Activated B cell treated with CpG ODN at 0.5 μM for 24 hours (primary cell): ENCODE measurements at regions of chr10 and their contacts with region 1.

Region 1: DNA sequence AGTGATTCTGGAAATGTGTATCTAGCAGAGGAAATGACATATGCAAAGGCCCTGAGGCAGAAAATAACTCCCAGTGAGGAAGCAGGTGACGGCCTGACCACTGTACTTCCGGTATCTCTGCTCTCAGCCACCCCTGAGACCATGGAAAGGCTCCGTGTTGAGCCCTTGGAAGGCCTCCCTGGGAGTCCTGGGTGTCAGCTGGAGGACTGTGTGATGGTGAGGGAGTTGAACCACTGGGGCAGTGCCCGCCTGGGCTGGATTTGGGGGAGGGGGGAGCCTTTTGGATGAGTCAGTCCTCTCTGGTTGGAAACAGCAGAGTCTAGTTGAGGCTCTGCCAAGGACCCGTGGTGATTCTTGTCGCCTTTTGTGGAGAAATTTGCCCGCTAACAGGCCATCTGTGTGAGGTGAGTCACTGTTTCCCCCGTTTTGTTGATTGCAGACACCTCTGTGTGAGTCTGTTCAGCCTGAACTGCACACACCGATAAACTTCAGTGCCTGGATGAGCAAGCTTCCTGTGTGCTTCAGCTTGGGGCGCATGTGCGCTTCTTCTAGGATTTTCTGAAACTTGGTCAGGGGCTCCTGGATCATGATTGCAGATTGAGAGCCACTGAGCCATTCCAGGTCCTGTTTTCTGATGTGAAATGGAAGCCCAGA is 98.6 kb downstream of the GRK5 start:
- DNase-seq: peak; percentile 77
- ATAC-seq: peak; percentile 72
- H3K4me3 Mint-ChIP-seq: peak overlapping the region; percentile 86
- H3K27ac Mint-ChIP-seq: peak overlapping the region; percentile 100
- H3K4me1 Mint-ChIP-seq: peaks cover 98% of the 10 kb centered on the region
- H3K27me3 Mint-ChIP-seq: no peaks in the 10 kb centered on the region
- CTCF ChIP-seq: no peak

Region 2: GRCh38 chr10:118729641-118730258 is 576.2 kb before region 1 on chr10:
- CTCF ChIA-PET with region 1: no interaction called
- POLR2A ChIA-PET with region 1: no interaction called
- intact Hi-C with region 1: loop called (anchors 5 kb)
- DNase-seq: no peak
- ATAC-seq: peak; percentile 96
- H3K4me3 Mint-ChIP-seq: peak overlapping the region; percentile 63
- H3K27ac Mint-ChIP-seq: peak overlapping the region; percentile 80
- H3K4me1 Mint-ChIP-seq: peaks cover 53% of the 10 kb centered on the region
- H3K27me3 Mint-ChIP-seq: no peaks in the 10 kb centered on the region
- CTCF ChIP-seq: no peak

Region 3: DNA sequence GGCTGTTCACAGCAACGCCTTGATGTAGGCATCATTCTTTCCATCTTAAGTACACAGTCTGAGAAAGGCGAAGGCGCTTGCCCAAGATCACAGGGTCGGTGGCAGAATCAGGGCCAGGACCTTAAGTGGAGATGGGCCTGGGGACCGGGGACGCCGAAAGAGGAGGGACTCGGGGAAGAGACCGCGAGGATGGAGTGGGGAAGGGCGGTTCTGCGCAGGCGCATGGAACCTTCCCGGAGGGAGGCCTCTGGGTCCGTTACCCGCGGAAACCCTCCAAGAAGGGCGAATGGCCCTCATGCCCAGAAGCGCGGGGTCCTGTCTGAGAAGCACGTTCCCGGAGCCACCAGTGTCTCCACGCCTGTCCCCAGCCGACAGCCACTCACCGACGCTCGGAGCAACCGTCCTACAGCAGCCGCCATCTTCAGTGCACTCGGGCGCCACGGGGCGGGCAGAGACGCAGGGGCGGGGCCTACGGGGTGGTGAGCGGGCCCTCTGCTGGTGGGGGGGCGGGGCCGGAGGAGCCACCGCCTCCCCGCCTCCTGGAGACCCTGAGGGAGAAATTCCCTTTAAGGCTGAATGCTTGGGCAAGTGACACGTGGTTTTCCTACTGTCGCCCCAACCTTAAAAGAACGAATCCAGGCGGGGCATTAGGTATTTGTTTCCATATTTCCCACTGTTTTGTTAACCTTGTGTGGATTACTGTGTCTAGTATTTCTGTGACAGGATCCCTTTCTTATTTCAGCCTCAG is 127.4 kb before region 1 on chr10 and contains the start of gene PRDX3:
- CTCF ChIA-PET with region 1: no interaction called
- POLR2A ChIA-PET with region 1: interaction called, 5 read pairs
- intact Hi-C with region 1: loop called (anchors 1 kb)
- DNase-seq: peak; percentile 92
- ATAC-seq: peak; percentile 99
- H3K4me3 Mint-ChIP-seq: peak within 1 kb of the TSS; percentile 98
- H3K27ac Mint-ChIP-seq: peak within 1 kb of the TSS; percentile 93
- H3K4me1 Mint-ChIP-seq: peaks cover 26% of the 10 kb centered on the region
- H3K27me3 Mint-ChIP-seq: no peaks in the 10 kb centered on the region
- CTCF ChIP-seq: no peak
- total RNA-seq, gene PRDX3: 62.8 and 63.7 TPM in 2 replicates

Region 4: DNA sequence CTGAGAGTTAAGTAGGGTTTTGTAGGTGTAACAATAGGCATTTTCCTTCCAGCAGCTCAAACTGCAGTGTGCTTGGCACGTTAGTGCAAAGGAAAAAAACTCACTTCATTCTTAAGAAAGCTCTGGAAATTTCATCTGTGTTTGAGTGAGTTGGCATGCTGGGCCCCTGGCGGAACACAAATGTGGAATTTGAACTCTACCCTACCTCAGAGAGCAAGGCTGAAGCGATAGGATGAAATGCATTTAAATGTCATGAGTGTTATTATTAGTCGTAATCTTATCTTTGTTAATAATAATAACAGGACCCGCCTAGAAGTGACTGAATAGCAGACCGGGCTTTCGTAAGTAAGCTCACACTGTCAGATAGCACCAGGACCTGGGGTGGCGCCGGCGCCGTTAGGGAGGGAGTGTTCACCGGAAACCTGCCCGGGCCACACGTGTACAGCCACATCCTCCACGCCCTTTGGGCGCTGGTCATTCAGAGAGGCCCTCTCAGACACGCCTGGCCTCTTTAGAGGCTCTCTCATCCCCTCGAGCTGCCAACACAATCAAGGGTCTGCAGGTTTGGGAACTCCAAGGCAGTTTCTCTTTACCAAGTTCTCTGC is 35.1 kb before region 1 on chr10:
- CTCF ChIA-PET with region 1: interaction called, 5 read pairs
- POLR2A ChIA-PET with region 1: interaction called, 34 read pairs
- intact Hi-C with region 1: loop called (anchors 1 kb)
- DNase-seq: peak; percentile 45
- ATAC-seq: peak; percentile 49
- H3K4me3 Mint-ChIP-seq: peak overlapping the region; percentile 69
- H3K27ac Mint-ChIP-seq: peak overlapping the region; percentile 96
- H3K4me1 Mint-ChIP-seq: peaks cover 87% of the 10 kb centered on the region
- H3K27me3 Mint-ChIP-seq: no peaks in the 10 kb centered on the region
- CTCF ChIP-seq: no peak

Region 5: GRCh38 chr10:119348516-119349240 is 42.7 kb after region 1 on chr10:
- CTCF ChIA-PET with region 1: no interaction called
- POLR2A ChIA-PET with region 1: no interaction called
- intact Hi-C with region 1: no loop called
- DNase-seq: no peak
- ATAC-seq: no peak
- H3K4me3 Mint-ChIP-seq: no peak overlapping the region
- H3K27ac Mint-ChIP-seq: no peak overlapping the region
- H3K4me1 Mint-ChIP-seq: peaks cover 19% of the 10 kb centered on the region
- H3K27me3 Mint-ChIP-seq: no peaks in the 10 kb centered on the region
- CTCF ChIP-seq: no peak

Region 6: GRCh38 chr10:119395280-119395989 is 89.4 kb after region 1 on chr10:
- CTCF ChIA-PET with region 1: interaction called, 3 read pairs
- POLR2A ChIA-PET with region 1: interaction called, 11 read pairs
- intact Hi-C with region 1: loop called (anchors 2 kb)
- DNase-seq: peak; percentile 32
- ATAC-seq: peak; percentile 77
- H3K4me3 Mint-ChIP-seq: peak overlapping the region; percentile 60
- H3K27ac Mint-ChIP-seq: peak overlapping the region; percentile 91
- H3K4me1 Mint-ChIP-seq: peaks cover 44% of the 10 kb centered on the region
- H3K27me3 Mint-ChIP-seq: no peaks in the 10 kb centered on the region
- CTCF ChIP-seq: no peak

Region 7: GRCh38 chr10:119478111-119478802 is 172.3 kb after region 1 on chr10:
- CTCF ChIA-PET with region 1: interaction called, 3 read pairs
- POLR2A ChIA-PET with region 1: interaction called, 14 read pairs
- intact Hi-C with region 1: loop called (anchors 1 kb)
- DNase-seq: peak; percentile 66
- ATAC-seq: peak; percentile 96
- H3K4me3 Mint-ChIP-seq: peak overlapping the region; percentile 68
- H3K27ac Mint-ChIP-seq: peak overlapping the region; percentile 93
- H3K4me1 Mint-ChIP-seq: peaks cover 40% of the 10 kb centered on the region
- H3K27me3 Mint-ChIP-seq: no peaks in the 10 kb centered on the region
- CTCF ChIP-seq: no peak

Region 8: DNA sequence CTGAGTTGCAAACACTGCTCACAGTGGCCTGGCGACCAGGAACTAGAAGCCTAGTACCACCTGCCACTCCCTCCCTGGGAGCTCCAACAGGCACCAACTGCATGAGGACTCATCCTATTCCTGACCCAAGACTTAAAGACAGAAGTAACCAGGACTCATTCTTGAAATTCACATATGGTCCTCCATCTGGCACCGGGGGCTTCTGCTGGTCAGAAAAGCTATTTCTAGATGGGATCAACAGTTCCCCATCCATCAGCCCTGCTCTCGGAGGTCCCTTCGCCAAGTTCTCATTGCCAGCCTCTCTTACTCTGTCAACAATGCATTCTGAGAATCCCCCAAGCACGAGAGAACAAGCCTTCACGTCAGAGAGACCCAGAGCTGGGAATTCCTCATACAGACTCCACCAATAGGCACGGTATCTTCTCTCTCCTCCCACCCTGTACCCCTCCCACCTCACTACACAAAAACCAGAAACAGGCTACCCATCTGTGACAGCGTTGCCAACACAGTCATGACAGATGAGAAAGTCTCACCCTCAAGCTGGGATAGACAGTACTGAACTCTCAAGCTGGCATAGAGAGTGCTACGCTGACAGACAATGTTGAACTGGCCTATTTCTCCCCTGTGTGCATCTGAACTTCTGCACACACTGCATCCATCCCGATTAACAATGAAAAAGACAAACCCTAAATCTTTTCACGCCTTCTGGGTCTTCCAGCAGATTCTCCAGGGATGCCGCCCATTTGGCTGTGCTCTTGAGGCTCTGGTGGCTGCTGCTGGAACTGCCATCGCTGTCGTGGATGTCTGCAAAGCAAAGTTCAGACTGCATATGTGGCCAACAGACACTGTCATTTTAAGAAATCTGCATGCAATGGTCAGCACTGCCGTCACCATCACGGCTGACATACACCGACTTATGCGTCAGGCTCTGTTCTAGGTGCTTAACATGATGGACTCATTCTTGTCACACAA is 220.9 kb after region 1 on chr10:
- CTCF ChIA-PET with region 1: no interaction called
- POLR2A ChIA-PET with region 1: no interaction called
- intact Hi-C with region 1: no loop called
- DNase-seq: no peak
- ATAC-seq: peak; percentile 42
- H3K4me3 Mint-ChIP-seq: no peak overlapping the region
- H3K27ac Mint-ChIP-seq: no peak overlapping the region
- H3K4me1 Mint-ChIP-seq: peaks cover 3% of the 10 kb centered on the region
- H3K27me3 Mint-ChIP-seq: no peaks in the 10 kb centered on the region
- CTCF ChIP-seq: no peak

Region 9: GRCh38 chr10:119596537-119597404 is 290.8 kb after region 1 on chr10 and contains the start of gene TIAL1:
- CTCF ChIA-PET with region 1: no interaction called
- POLR2A ChIA-PET with region 1: no interaction called
- intact Hi-C with region 1: loop called (anchors 2 kb)
- DNase-seq: peak; percentile 84
- ATAC-seq: peak; percentile 84
- H3K4me3 Mint-ChIP-seq: peak within 1 kb of the TSS; percentile 95
- H3K27ac Mint-ChIP-seq: peak within 1 kb of the TSS; percentile 97
- H3K4me1 Mint-ChIP-seq: peaks cover 54% of the 10 kb centered on the region
- H3K27me3 Mint-ChIP-seq: no peaks in the 10 kb centered on the region
- CTCF ChIP-seq: no peak
- total RNA-seq, gene TIAL1: 142 and 155 TPM in 2 replicates